ENCODE measurements at regions of chr17 and their contacts with region 1.

Region 1: DNA sequence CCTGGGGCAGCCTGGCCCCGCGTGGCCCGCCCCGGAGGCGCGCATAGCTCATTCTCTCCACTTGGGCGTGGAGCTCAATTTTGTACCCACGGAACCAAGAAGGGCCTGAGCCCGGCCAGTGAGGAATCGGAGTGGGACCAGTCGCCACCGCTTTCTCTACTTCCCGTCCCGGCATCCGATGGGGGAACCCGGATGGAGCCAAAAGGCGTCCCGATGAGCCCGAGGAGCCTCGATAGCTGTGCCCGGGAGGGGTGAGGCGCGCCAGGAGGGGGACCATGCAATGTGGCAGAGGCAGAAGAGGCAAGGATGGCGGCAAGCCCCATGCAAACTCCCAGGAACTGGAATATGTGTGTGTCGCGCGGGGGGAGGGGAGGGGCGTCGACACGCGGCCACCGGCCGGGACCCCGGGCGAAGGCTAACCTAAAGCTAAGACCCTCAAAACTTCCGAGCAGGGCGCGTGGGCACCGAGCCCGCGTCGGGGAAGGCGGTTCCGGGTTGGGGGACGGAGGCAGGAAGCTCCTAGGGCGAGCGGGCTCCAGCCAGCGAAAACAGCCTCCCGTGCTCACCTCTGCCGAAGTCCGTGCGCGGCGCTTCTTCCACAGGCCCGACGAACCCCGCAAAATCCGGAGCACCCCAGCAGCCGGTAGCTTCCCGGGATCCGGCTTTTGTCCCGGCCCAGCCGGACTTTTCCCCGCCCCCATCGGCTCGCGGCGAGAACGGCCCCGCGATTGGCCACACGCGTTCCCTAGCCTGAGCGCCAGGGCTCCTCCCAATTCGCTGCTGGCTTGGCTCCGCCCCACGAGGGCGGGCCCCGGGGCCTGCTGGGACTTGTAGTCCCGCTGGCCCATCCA is at the start of gene ACLY:
- DNase-seq: peak; percentile 92 to 96
- ATAC-seq: peak; percentile 92 to 93
- H3K4me3 ChIP-seq: peak within 1 kb of the TSS; percentile 78 to 97 (median 92)
- H3K27ac ChIP-seq: peak within 1 kb of the TSS; percentile 86 to 94 (median 90)
- H3K4me1 ChIP-seq: peaks cover 14 to 19% of the 10 kb centered on the region in 2 donors
- H3K27me3 ChIP-seq: no peaks in the 10 kb centered on the region
- CTCF ChIP-seq: no peak
- POLR2A ChIP-seq: peak; percentile 81 to 83
- total RNA-seq, gene ACLY: 20.8 to 35.0 (median 30.7) TPM

Region 2: DNA sequence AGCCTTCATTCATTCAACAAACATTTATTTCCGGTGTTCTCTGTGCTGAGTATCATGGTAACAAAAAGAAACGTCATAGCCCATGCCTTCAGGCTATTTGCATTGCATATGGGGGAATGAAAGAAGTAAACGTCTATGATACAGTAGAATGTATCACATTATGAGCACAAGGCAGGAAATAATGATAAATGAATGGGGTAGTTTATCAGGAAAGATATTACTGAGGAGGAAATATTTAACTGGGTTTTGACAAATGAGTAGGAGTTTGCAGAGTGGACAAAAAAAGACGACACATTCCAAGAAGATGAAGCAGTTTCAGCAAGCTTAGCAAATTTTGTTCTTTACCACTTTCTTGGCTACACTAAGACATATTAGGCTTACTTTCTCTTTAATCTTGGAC is 835.9 kb before region 1 on chr17:
- in situ Hi-C with region 1: no loop called
- intact Hi-C with region 1: no loop called
- DNase-seq: no peak
- ATAC-seq: no peak
- H3K4me3 ChIP-seq: no peak overlapping the region
- H3K27ac ChIP-seq: no peak overlapping the region
- H3K4me1 ChIP-seq: no peaks in the 10 kb centered on the region
- H3K27me3 ChIP-seq: peaks cover 0 to 6% (median 0%) of the 10 kb centered on the region in 3 donors
- CTCF ChIP-seq: no peak
- POLR2A ChIP-seq: no peak

Region 3: DNA sequence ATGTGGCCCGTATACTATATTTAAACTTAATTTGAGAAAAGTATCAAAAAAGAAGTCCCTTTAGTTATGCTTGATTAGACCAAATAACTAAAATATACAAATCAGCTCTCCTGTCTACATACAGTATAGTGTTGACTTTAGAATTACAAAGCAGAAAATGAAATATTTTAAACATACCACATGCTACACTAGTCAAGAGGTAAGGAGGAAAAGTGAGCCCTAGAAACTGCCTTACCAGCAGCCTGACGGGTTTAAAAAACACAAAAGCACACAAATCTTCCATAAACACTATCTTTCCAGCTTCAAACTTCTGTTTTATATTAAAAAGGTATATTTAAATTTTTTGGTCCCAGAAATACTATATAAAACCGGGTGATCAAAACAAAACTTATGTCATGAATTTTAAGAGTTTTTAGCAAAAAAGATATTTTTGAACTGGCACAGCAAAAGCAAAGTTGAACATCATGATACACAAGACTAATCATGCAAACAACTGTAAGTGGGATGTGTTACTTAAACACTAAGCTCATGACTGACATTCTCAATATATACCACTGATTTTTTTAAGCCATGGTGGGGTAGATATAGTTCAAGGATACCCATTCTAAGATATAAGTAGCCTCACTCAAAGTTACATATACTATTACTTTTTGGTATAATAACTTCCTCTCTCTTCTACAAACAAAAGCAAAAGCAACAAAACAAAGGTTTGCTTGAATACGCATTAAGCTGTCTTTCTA is 69.1 kb before region 1 on chr17:
- in situ Hi-C with region 1: no loop called
- intact Hi-C with region 1: no loop called
- DNase-seq: no peak
- ATAC-seq: no peak
- H3K4me3 ChIP-seq: no peak overlapping the region
- H3K27ac ChIP-seq: peak overlapping the region in 1 of 4 donors; percentile 4
- H3K4me1 ChIP-seq: peaks cover 13 to 16% of the 10 kb centered on the region in 2 donors
- H3K27me3 ChIP-seq: no peaks in the 10 kb centered on the region
- CTCF ChIP-seq: no peak
- POLR2A ChIP-seq: no peak

Region 4: DNA sequence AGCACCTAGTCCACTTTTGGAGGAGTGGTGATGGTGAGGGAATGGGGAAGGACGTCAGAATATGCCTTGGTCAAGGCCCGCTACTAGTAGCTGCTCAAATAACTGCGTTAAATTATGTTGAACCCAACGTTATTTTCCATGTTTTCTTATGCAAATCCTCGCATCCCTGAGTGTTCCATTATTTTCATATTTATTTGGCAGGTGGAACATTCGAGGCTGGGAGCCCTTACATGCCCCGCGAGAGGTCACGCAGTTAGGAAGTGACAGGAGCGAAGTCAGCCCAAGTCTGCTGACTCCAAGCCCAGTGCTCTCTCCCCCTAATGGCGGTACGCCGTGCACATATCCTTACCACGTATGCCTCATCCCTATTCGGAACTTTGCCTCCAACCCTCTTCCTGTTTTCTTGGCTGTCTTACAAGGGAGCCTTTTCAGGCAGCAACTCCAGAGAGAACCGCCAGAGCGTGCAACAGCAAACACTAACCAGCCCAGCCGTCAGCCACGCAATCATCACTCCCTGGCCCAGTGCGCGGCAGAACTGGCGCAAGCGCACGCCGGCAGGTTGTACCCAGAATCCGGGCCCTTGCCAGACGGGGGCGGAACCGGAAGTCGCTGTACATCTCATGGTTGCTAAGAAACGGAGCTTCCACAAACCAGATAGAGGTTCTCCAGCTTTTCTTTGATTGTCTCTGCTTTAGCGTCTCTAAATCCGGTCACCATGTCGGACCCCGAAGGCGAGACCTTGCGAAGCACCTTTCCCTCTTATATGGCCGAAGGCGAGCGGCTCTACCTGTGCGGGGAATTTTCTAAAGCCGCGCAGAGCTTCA is 11.7 kb after region 1 on chr17 and contains the start of gene ODAD4:
- in situ Hi-C with region 1: no loop called
- intact Hi-C with region 1: loop called (anchors 1 kb)
- DNase-seq: peak; percentile 91 to 96
- ATAC-seq: peak; percentile 96 to 98
- H3K4me3 ChIP-seq: peak within 1 kb of the TSS; percentile 41 to 70 (median 62)
- H3K27ac ChIP-seq: peak within 1 kb of the TSS; percentile 84 to 97 (median 90)
- H3K4me1 ChIP-seq: peaks cover 5 to 12% of the 10 kb centered on the region in 2 donors
- H3K27me3 ChIP-seq: no peaks in the 10 kb centered on the region
- CTCF ChIP-seq: peak; percentile 56 to 69 (median 62)
- POLR2A ChIP-seq: peak; percentile 53 to 65
- total RNA-seq, gene ODAD4: 0.13 to 1.3 (median 0.20) TPM in 3 of 4 donors, not detected in the other

Region 5: DNA sequence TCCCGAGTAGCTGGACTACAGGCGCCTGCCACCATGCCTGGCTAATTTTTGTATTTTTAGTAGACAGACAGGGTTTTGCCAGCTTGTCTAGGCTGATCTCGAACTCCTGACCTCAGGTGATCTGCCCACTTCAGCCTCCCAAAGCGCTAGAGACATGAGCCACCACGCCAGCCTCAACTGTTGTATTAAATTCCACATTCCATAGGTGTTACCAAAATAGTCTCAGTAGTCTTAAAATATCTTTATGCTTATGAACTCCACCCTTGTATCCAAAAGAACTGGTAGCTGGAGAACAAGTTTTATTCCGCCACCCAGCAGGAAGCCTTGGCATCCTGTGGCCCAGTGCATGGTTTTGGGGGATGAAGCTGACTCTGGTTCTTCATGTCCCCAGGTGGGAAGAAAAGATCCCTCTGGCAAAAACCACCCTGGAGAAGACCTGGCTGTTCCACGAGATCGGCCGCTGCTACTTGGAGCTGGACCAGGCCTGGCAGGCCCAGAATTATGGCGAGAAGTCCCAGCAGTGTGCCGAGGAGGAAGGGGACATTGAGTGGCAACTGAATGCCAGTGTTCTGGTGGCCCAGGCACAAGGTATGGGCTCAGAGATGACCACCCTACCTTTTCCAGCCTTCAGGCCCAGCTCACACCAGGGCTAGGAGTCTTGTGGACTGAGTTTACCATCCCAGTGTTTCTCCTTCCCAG is 30.4 kb after region 1 on chr17:
- in situ Hi-C with region 1: no loop called
- intact Hi-C with region 1: no loop called
- DNase-seq: no peak
- ATAC-seq: peak in 1 of 2 donors; percentile 44
- H3K4me3 ChIP-seq: no peak overlapping the region
- H3K27ac ChIP-seq: peak overlapping the region in 3 of 4 donors; percentile 30 to 57 (median 46)
- H3K4me1 ChIP-seq: peaks cover 0 to 7% of the 10 kb centered on the region in 2 donors
- H3K27me3 ChIP-seq: no peaks in the 10 kb centered on the region
- CTCF ChIP-seq: no peak
- POLR2A ChIP-seq: no peak